Head of caudate nucleus (tissue), 42 donors: ENCODE measurements at regions of chr11 and their contacts with region 1.

Region 1: DNA sequence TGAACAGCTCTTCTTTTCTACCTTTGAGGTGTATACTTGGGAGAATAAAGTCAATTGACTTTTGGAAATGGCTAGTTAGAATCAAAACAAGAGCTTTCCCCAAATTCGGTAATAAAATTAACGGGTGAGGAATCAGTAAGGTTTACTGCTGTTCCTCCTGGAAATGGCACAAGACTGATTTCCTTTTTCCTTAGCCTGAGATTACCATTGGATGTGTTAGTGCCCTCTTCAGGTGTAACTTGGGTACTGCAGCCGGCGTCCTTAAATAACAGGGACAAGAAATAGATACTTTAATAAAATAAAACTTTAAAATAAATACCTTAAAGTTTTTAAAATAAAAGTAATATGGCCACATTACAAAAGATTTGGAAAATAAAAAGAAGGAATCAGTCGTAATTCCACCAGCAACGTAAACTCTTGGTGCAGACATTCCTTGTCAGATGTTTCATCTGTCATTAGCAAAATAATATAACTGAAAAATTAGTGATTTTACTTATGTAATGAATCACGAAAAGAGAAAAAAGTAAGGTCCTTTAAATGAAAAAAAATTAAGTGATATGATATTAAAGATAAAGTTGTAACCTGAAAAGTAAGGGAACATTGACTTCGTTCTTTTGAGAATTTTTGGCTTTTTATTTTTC is 29.7 kb downstream of the ZFTA start:
- DNase-seq: peak; percentile 18 to 94 (median 80)

Region 2: GRCh38 chr11:63671322-63672155 is 67.3 kb before region 1 on chr11 and contains the start of gene ATL3:
- intact Hi-C with region 1: loop called (anchors 5 kb)
- DNase-seq: peak; percentile 97 to 100 (median 98)